Heart right ventricle (tissue), 16 donors: ENCODE measurements at regions of chr5 and their contacts with region 1.

Region 1: GRCh38 chr5:139422307-139422893 is 16.9 kb downstream of the DNAJC18 start:
- DNase-seq: peak in 1 of 2 donors; percentile 61
- ATAC-seq: peak in 4 of 8 donors; percentile 17 to 55 (median 33)
- H3K4me3 ChIP-seq: no peak overlapping the region
- H3K27ac ChIP-seq: peak overlapping the region in 1 of 10 donors; percentile 12
- H3K4me1 ChIP-seq: peaks cover 16 to 33% (median 27%) of the 10 kb centered on the region in 9 donors
- H3K27me3 ChIP-seq: no peaks in the 10 kb centered on the region
- CTCF ChIP-seq: peak; percentile 49 to 95 (median 85)

Region 2: GRCh38 chr5:139512786-139513390 is 90.5 kb after region 1 on chr5:
- intact Hi-C with region 1: loop called (anchors 1 to 5 kb)
- DNase-seq: no peak
- ATAC-seq: no peak
- H3K4me3 ChIP-seq: no peak overlapping the region
- H3K27ac ChIP-seq: peak overlapping the region in 4 of 10 donors; percentile 14 to 34 (median 20)
- H3K4me1 ChIP-seq: peaks cover 0 to 25% (median 12%) of the 10 kb centered on the region in 9 donors
- H3K27me3 ChIP-seq: no peaks in the 10 kb centered on the region
- CTCF ChIP-seq: no peak

Region 3: GRCh38 chr5:139517683-139518564 is 95.5 kb after region 1 on chr5:
- intact Hi-C with region 1: loop called in 9 of 10 experiments (anchors 1 to 5 kb)
- DNase-seq: peak; percentile 90 to 94
- ATAC-seq: peak; percentile 90 to 95 (median 94)
- H3K4me3 ChIP-seq: peak overlapping the region; percentile 31 to 66 (median 57)
- H3K27ac ChIP-seq: peak overlapping the region; percentile 68 to 92 (median 90)
- H3K4me1 ChIP-seq: peaks cover 0 to 29% (median 17%) of the 10 kb centered on the region in 9 donors
- H3K27me3 ChIP-seq: no peaks in the 10 kb centered on the region
- CTCF ChIP-seq: peak; percentile 92 to 99 (median 99)

Region 4: DNA sequence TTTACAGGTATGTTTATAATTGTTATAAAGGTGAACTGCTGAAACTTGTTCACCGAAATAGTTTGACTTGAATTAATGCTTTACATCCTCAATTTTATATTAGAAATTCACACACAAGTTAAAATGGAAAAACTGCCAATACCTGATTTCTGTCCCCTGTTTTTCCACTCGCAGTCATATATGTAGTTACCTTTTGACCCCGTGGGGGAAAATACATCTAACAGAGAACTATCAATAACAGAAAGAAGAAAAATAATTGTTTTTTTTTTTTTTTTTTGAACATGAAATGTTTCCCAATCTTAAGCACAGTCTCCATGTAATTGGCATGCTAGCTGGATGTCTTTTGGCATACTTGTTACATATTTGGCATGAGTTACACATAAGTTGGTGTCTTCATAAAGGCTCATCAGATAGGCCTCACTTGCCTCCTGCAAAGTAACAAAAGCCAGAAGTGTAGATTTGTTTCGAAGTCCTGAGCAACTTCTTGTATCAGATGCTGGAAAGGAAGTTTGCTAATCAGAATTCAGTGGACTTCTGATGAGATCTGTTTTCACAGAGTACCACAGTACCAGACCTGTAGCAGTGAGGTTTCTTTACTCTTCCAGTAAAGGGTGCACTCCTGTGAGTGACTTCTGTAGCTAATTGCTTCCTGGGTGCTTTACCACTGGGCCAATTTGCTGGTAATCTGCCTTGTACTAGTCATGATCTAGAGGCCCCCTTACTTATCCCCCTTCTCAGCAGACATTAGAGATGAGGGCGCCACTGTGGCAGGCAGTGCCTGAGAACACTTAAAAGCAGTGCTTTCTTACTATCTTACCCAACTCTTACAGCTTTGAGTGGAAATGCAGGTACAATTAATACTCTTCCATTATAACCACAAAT is 189.5 kb after region 1 on chr5:
- intact Hi-C with region 1: loop called in 1 of 10 experiments (anchors 10 kb)
- DNase-seq: no peak
- ATAC-seq: no peak
- H3K4me3 ChIP-seq: no peak overlapping the region
- H3K27ac ChIP-seq: no peak overlapping the region
- H3K4me1 ChIP-seq: peaks cover 0 to 31% (median 18%) of the 10 kb centered on the region in 9 donors
- H3K27me3 ChIP-seq: no peaks in the 10 kb centered on the region
- CTCF ChIP-seq: no peak

Region 5: GRCh38 chr5:139619861-139620260 is 197.5 kb after region 1 on chr5:
- intact Hi-C with region 1: loop called in 4 of 10 experiments (anchors 10 kb)
- DNase-seq: no peak
- ATAC-seq: no peak
- H3K4me3 ChIP-seq: no peak overlapping the region
- H3K27ac ChIP-seq: no peak overlapping the region
- H3K4me1 ChIP-seq: peaks cover 0 to 5% (median 0%) of the 10 kb centered on the region in 9 donors
- H3K27me3 ChIP-seq: no peaks in the 10 kb centered on the region
- CTCF ChIP-seq: no peak

Region 6: DNA sequence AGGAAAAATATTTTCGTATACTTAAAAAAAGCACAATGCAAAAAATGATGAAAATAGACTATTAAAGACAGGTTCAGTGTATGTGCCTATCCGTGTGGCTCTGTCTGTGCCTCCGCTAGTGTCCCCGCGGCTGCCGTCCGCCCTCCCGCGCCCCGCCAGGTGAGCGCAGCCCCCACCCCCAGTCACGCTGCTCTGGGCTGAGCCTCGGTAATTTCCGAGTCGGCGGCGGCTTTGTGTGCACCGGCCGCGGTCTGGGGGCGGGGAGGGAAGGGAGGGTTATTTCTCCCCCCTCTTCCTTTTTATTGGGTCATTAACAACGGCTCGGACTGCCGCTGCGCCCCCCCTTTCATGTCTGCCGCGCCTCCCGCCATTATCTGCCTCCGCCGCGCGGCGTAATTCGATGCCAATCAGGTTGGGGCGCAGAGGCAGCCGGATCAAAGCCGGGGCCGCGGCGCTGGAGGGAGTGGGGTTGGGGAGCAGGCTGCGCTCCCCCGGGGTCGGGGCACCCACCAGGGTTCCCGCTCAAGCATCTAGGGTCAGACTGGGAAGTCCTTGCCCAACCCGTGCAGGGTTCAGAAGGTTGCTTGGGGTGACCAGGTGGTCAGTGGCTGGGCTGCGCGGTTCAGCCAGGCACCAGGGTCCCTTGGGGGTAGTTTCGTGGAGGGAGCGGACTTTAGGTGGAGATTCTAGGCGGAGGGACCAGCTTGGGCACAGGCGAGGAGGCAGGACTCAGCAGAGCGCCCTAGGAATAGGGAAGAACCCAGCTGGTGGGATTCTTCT is 333.7 kb after region 1 on chr5:
- intact Hi-C with region 1: loop called in 5 of 10 experiments (anchors 10 kb)
- DNase-seq: no peak
- ATAC-seq: peak in 1 of 8 donors; percentile 34
- H3K4me3 ChIP-seq: peak overlapping the region in 9 of 10 donors; percentile 1 to 35 (median 22)
- H3K27ac ChIP-seq: no peak overlapping the region
- H3K4me1 ChIP-seq: peaks cover 5 to 10% (median 8%) of the 10 kb centered on the region in 9 donors
- H3K27me3 ChIP-seq: peaks cover 3 to 83% (median 49%) of the 10 kb centered on the region in 7 donors
- CTCF ChIP-seq: no peak

Region 7: DNA sequence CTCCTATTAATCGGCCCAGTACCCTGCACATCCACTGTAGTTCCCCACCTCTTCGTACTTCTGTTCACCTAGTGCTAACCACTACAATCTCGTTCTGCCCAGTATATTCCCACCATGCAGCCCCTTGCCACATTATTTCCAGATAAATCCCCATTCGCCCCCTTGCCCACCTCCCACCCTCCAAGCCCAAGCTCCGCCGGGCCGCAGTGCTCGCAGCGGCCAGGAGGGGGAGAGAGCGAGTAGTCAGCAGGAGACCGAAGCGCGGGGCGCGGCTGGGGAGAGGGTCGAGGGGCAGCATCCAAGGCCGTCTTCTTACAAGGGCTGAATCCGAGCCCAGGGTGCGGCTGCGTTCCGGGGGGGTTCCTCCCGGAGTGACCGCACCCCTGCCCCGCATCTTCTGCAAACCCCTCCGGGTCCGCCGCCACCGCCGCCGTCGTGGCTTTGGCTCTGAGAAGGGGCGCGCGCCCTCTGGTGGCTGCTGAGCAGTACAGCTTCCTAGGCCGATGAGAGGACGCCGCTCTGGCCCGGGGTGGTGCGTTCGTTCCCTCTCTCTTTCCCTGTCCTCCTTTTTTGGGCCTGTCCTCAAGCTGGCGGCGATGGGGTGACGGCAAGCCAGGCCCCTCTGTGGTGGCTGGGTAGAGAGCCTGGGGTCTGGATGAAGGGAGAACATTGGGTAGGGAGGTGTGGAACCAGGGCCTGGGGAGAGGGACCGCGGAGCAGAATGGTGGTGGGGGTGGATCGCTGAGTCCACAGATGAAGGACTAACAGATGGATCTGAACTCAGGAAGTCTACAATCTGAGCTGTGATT is 343.2 kb after region 1 on chr5:
- intact Hi-C with region 1: loop called in 4 of 10 experiments (anchors 10 kb)
- DNase-seq: peak; percentile 73 to 86
- ATAC-seq: peak; percentile 84 to 95 (median 90)
- H3K4me3 ChIP-seq: peak overlapping the region; percentile 16 to 65 (median 53)
- H3K27ac ChIP-seq: peak overlapping the region in 3 of 10 donors; percentile 2 to 67 (median 3)
- H3K4me1 ChIP-seq: peaks cover 5 to 29% (median 18%) of the 10 kb centered on the region in 9 donors
- H3K27me3 ChIP-seq: peaks cover 4 to 28% (median 23%) of the 10 kb centered on the region in 7 donors
- CTCF ChIP-seq: peak; percentile 92 to 99 (median 98)